CD14-positive monocyte (primary cell): ENCODE measurements at regions of chr5 and their contacts with region 1.

Region 1: DNA sequence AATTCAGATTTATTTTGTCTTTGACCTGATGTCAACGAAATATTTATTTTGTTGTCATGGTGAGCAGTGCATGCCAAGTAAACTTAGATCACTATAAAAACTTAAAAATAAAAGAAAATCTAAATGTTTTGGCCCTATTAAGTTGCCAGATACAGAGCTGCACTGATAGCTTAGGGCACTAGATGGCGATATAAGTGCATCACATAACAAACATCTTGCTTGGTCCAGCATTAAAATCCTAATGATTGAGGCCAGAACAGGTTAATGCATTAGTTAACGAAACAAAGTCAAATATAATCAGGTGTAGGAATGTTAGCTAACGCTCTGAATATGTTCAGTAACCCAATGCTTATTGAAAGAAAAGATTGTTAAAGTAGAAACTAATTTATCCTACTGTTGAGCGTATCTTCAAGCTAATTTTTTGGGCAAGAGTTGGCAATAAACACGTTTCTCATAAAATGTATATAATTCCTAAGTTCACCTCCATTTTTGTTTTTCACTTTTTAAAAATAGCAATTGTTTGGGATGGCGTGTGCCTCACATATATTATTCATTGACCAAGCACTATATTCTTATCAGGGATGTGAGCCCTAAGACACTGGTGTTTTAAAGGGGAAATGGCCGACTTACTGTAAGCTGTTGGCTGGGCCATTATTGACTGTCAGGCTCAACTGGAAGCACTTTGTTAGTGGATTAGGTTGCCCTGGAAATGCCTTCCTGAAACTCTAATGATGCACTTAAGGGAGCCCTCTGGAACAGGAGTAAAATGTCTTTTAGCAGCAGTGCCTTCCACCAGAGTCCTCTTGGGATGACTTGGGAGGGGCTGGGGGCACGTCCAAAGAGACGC is 33.3 kb downstream of the KCTD16 start:
- DNase-seq: peak; percentile 23 to 51 (median 45)
- H3K4me3 ChIP-seq: no peak overlapping the region
- H3K4me3 Mint-ChIP-seq: peak overlapping the region in 1 of 2 donors; percentile 47
- H3K27ac ChIP-seq: no peak overlapping the region
- H3K27ac Mint-ChIP-seq: no peak overlapping the region
- H3K4me1 ChIP-seq: no peaks in the 10 kb centered on the region
- H3K4me1 Mint-ChIP-seq: peaks cover 7% of the 10 kb centered on the region
- H3K27me3 ChIP-seq: peaks cover 29 to 42% of the 10 kb centered on the region in 2 donors
- H3K27me3 Mint-ChIP-seq: peaks cover 23 to 40% (median 38%) of the 10 kb centered on the region in 3 donors
- CTCF ChIP-seq: peak; percentile 92

Region 2: DNA sequence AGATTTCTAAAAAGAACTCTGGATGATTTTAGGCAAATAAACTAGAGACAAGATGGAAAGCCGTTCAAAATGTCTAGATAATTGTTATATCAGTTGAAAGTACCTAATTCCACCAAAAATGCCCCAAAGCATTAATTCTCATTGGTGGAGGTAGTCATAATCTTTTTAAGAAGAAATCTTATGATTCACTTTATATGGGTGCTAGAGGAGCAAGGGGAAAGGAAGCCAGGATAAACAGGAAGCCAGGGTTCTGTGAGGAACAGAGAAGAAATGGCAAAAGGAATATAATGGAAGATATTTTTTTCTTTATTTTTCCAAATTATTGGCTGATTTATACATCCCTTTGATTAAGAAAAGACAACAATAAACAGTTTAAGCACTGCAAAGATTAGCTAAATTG is 41.3 kb before region 1 on chr5:
- intact Hi-C with region 1: no loop called
- DNase-seq: no peak
- H3K4me3 ChIP-seq: no peak overlapping the region
- H3K4me3 Mint-ChIP-seq: no peak overlapping the region
- H3K27ac ChIP-seq: no peak overlapping the region
- H3K27ac Mint-ChIP-seq: no peak overlapping the region
- H3K4me1 ChIP-seq: no peaks in the 10 kb centered on the region
- H3K4me1 Mint-ChIP-seq: no peaks in the 10 kb centered on the region
- H3K27me3 ChIP-seq: no peaks in the 10 kb centered on the region
- H3K27me3 Mint-ChIP-seq: no peaks in the 10 kb centered on the region
- CTCF ChIP-seq: no peak

Region 3: GRCh38 chr5:144697847-144698262 is 493.9 kb after region 1 on chr5:
- intact Hi-C with region 1: no loop called
- DNase-seq: no peak
- H3K4me3 ChIP-seq: no peak overlapping the region
- H3K4me3 Mint-ChIP-seq: no peak overlapping the region
- H3K27ac ChIP-seq: no peak overlapping the region
- H3K27ac Mint-ChIP-seq: no peak overlapping the region
- H3K4me1 ChIP-seq: no peaks in the 10 kb centered on the region
- H3K4me1 Mint-ChIP-seq: no peaks in the 10 kb centered on the region
- H3K27me3 ChIP-seq: no peaks in the 10 kb centered on the region
- H3K27me3 Mint-ChIP-seq: peaks cover 0 to 1% (median 0%) of the 10 kb centered on the region in 3 donors
- CTCF ChIP-seq: no peak

Region 4: DNA sequence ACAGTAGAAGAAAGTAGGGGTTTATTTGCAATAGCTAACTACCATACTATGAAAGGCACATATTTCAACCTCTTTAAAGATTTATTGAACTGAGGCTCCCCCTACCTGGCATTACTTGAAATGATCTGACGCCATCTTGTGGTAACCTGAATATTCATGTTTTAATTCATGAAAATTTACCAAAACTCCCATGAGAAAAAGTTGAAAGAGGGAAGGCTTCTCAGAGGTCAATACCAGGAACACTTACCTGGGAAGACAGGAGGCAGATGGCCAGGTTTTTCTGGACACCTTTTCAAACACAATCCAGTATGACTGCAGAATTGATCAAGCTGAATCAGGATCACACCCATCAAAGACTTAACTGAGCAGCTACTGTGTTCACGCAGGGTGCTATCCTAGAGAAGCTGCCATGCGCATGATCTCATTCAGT is 1621.8 kb after region 1 on chr5:
- intact Hi-C with region 1: loop called in 1 of 2 experiments (anchors 10 kb)
- DNase-seq: peak; percentile 23 to 48 (median 43)
- H3K4me3 ChIP-seq: no peak overlapping the region
- H3K4me3 Mint-ChIP-seq: no peak overlapping the region
- H3K27ac ChIP-seq: no peak overlapping the region
- H3K27ac Mint-ChIP-seq: no peak overlapping the region
- H3K4me1 ChIP-seq: no peaks in the 10 kb centered on the region
- H3K4me1 Mint-ChIP-seq: peaks cover 4% of the 10 kb centered on the region
- H3K27me3 ChIP-seq: no peaks in the 10 kb centered on the region
- H3K27me3 Mint-ChIP-seq: peaks cover 0 to 2% (median 0%) of the 10 kb centered on the region in 3 donors
- CTCF ChIP-seq: peak; percentile 82

Region 5: GRCh38 chr5:146049014-146049703 is 1845.2 kb after region 1 on chr5:
- intact Hi-C with region 1: loop called in 1 of 2 experiments (anchors 5 kb)
- DNase-seq: peak; percentile 32 to 49 (median 40)
- H3K4me3 ChIP-seq: no peak overlapping the region
- H3K4me3 Mint-ChIP-seq: no peak overlapping the region
- H3K27ac ChIP-seq: no peak overlapping the region
- H3K27ac Mint-ChIP-seq: peak overlapping the region in 1 of 7 donors; percentile 21
- H3K4me1 ChIP-seq: no peaks in the 10 kb centered on the region
- H3K4me1 Mint-ChIP-seq: no peaks in the 10 kb centered on the region
- H3K27me3 ChIP-seq: no peaks in the 10 kb centered on the region
- H3K27me3 Mint-ChIP-seq: peaks cover 1 to 5% (median 2%) of the 10 kb centered on the region in 3 donors
- CTCF ChIP-seq: peak; percentile 64